Naive thymus-derived CD8-positive, alpha-beta T cell (primary cell): ENCODE measurements at regions of chr15 and their contacts with region 1.

Region 1: DNA sequence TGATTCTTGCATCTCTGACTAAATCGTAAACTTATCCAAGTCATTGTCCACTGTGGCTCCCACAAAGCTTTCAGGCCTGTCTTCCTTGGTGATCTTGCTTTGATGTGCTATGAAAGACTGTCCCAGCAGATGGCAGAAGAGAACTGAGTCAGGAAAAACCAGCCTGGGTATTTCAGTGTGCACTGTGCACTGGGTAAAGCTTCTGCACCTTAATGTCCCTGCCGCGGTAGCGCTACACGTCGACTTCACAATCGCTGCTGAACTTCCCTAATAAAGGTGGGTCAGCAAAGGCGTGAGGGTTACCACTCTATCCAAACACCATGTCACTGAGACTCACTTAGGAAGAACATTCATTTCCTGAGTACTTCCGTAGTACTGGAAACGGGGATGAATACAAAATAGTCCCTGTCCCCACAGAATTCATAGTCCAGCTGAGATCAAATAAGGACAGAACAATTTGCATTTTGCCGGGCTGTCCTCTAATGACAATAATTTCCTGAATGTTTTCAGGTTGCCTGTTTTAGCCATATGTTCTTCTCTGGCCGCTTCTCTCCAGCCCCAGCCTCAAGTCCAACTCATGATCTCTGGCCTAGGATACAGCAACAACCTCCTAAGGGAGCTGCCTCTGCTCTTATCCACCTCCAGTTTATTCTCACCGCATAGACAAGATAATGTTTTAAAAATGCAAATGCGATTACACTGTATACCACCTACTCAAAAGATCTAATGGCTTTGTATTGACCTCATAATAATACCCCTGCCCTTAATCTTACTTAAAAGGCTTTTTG is 83.6 kb upstream of the AKAP13 start:
- DNase-seq: peak; percentile 25 to 82 (median 70)
- ATAC-seq: peak; percentile 99
- H3K4me3 Mint-ChIP-seq: peak overlapping the region; percentile 31 to 79 (median 67)
- H3K27ac Mint-ChIP-seq: peak overlapping the region in 5 of 10 donors; percentile 2 to 51 (median 32)
- H3K4me1 Mint-ChIP-seq: peaks cover 10 to 16% (median 12%) of the 10 kb centered on the region in 4 donors
- H3K27me3 Mint-ChIP-seq: peaks cover 0 to 2% (median 0%) of the 10 kb centered on the region in 5 donors

Region 2: GRCh38 chr15:85280203-85280602 is 16.6 kb before region 1 on chr15:
- POLR2A ChIA-PET with region 1: no interaction called
- DNase-seq: no peak
- ATAC-seq: no peak
- H3K4me3 Mint-ChIP-seq: no peak overlapping the region
- H3K27ac Mint-ChIP-seq: peak overlapping the region in 1 of 10 donors; percentile 70
- H3K4me1 Mint-ChIP-seq: no peaks in the 10 kb centered on the region
- H3K27me3 Mint-ChIP-seq: peaks cover 0 to 3% (median 0%) of the 10 kb centered on the region in 5 donors

Region 3: GRCh38 chr15:85412956-85413854 is 116.4 kb after region 1 on chr15:
- POLR2A ChIA-PET with region 1: interaction called, 16 read pairs
- DNase-seq: peak; percentile 36 to 78 (median 52)
- ATAC-seq: peak; percentile 97
- H3K4me3 Mint-ChIP-seq: peak overlapping the region in 9 of 10 donors; percentile 36 to 74 (median 63)
- H3K27ac Mint-ChIP-seq: peak overlapping the region; percentile 22 to 95 (median 84)
- H3K4me1 Mint-ChIP-seq: peaks cover 30 to 80% (median 71%) of the 10 kb centered on the region in 4 donors
- H3K27me3 Mint-ChIP-seq: no peaks in the 10 kb centered on the region